Activated naive CD4-positive, alpha-beta T cell treated with anti-CD3 and anti-CD28 coated beads for 36 hours (primary cell): ENCODE measurements at regions of chr2 and their contacts with region 1.

Region 1: DNA sequence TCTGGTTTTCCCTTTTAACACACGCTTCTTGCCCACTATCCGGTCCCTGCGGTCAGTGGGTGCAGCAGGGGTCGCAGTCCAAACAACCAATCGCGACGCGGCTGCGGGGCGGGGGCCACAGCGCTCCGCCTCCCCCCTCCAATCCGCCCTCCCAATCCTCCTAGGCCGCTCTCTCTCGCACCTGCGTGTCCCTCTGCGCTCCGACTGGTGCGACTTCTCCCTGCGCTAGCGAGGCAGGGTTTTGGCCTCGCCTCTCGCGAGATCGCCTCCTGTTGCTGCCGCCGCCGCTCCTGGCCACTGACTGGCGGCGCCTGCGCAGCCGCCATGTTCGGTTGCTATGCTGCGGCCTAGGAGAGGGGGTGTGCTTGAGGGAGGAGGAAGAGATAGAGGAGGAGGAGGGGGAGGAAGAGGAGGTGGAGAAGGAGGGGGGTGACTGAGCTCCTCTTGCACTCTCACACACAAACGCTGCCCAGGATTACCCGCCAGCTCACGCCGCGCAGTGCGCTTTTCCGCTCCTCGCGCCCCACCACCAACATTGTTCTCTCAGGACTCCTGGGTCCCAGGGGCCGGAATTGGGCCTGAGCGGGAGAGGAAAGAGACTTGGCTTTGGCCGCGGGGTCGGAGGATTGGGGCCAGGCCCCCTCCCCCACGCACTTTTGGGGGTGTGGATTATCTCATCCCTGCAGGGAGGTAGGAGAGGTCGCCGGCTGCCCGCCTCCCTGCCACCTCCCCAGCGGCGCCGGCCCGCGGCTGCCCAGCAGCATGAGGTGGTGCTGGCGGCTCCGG is at the start of gene PTPN4:
- DNase-seq: peak; percentile 96
- H3K4me3 Mint-ChIP-seq: peak within 1 kb of the TSS; percentile 86
- H3K27ac Mint-ChIP-seq: peak within 1 kb of the TSS; percentile 90
- H3K4me1 Mint-ChIP-seq: peaks cover 35% of the 10 kb centered on the region
- H3K27me3 Mint-ChIP-seq: no peaks in the 10 kb centered on the region
- total RNA-seq, gene PTPN4: 28.4 to 29.8 TPM

Region 2: DNA sequence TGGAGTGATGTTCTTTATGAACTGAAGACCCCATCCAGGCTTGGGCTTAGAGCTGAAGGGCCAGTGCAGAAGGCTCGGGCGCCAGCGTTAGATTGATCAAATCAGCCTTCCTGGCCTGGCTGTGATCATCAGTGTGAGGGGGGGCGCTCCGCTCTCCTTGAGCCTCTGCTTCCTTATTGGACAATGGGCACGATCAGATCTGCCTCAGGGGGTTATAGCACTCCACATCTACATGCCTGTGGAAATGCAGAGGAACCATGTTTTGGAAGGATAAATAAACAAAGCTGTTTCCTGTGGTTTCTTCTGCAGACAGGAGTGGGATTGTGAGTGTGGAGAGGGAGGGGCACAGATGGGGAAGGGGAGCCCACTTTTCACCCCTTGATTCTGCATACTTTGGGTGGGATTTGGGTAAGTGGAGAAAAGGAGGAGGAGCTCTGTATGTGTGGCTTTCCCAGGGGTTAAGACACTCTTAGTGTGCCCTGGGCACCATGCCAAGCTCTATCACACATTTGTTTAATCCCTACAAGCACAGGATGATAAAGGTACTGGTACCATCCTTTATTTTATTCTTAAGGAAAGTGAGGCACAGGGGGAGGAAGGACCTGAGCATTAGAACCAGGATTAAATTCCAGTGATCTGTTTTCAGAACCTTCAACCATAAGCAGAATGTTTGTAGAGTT is 1062.7 kb before region 1 on chr2:
- CTCF ChIA-PET with region 1: no interaction called
- intact Hi-C with region 1: no loop called
- DNase-seq: no peak
- H3K4me3 Mint-ChIP-seq: no peak overlapping the region
- H3K27ac Mint-ChIP-seq: no peak overlapping the region
- H3K4me1 Mint-ChIP-seq: no peaks in the 10 kb centered on the region
- H3K27me3 Mint-ChIP-seq: peaks cover 5% of the 10 kb centered on the region

Region 3: GRCh38 chr2:118732432-118732831 is 1027.2 kb before region 1 on chr2:
- CTCF ChIA-PET with region 1: no interaction called
- intact Hi-C with region 1: no loop called
- DNase-seq: no peak
- H3K4me3 Mint-ChIP-seq: no peak overlapping the region
- H3K27ac Mint-ChIP-seq: no peak overlapping the region
- H3K4me1 Mint-ChIP-seq: no peaks in the 10 kb centered on the region
- H3K27me3 Mint-ChIP-seq: peaks cover 10% of the 10 kb centered on the region

Region 4: GRCh38 chr2:119366649-119367471 is 392.8 kb before region 1 on chr2 and contains the starts of genes C2orf76 and DBI:
- CTCF ChIA-PET with region 1: no interaction called
- intact Hi-C with region 1: loop called (anchors 1 kb)
- DNase-seq: peak; percentile 94
- H3K4me3 Mint-ChIP-seq: peak within 1 kb of the TSS; percentile 99
- H3K27ac Mint-ChIP-seq: peak within 1 kb of the TSS; percentile 92
- H3K4me1 Mint-ChIP-seq: peaks cover 42% of the 10 kb centered on the region
- H3K27me3 Mint-ChIP-seq: no peaks in the 10 kb centered on the region
- total RNA-seq, gene C2orf76: 9.5 to 11.1 TPM
- total RNA-seq, gene DBI: 133 to 134 TPM

Region 5: GRCh38 chr2:119694845-119695521 is 64.7 kb before region 1 on chr2:
- CTCF ChIA-PET with region 1: no interaction called
- intact Hi-C with region 1: loop called (anchors 1 kb)
- DNase-seq: peak; percentile 51
- H3K4me3 Mint-ChIP-seq: peak overlapping the region; percentile 32
- H3K27ac Mint-ChIP-seq: no peak overlapping the region
- H3K4me1 Mint-ChIP-seq: peaks cover 48% of the 10 kb centered on the region
- H3K27me3 Mint-ChIP-seq: no peaks in the 10 kb centered on the region

Region 6: GRCh38 chr2:119826370-119826961 is 66.8 kb after region 1 on chr2:
- CTCF ChIA-PET with region 1: interaction called, 59 read pairs
- intact Hi-C with region 1: loop called (anchors 1 kb)
- DNase-seq: peak; percentile 58
- H3K4me3 Mint-ChIP-seq: no peak overlapping the region
- H3K27ac Mint-ChIP-seq: no peak overlapping the region
- H3K4me1 Mint-ChIP-seq: peaks cover 43% of the 10 kb centered on the region
- H3K27me3 Mint-ChIP-seq: no peaks in the 10 kb centered on the region

Region 7: GRCh38 chr2:120012771-120013596 is 253.3 kb after region 1 on chr2 and contains the start of gene EPB41L5:
- CTCF ChIA-PET with region 1: no interaction called
- intact Hi-C with region 1: loop called (anchors 1 kb)
- DNase-seq: peak; percentile 79
- H3K4me3 Mint-ChIP-seq: peak within 1 kb of the TSS; percentile 77
- H3K27ac Mint-ChIP-seq: no peak within 1 kb of the TSS
- H3K4me1 Mint-ChIP-seq: peaks cover 8% of the 10 kb centered on the region
- H3K27me3 Mint-ChIP-seq: no peaks in the 10 kb centered on the region
- total RNA-seq, gene EPB41L5: 2.3 to 2.5 TPM

Region 8: GRCh38 chr2:120231974-120232635 is 472.5 kb after region 1 on chr2:
- CTCF ChIA-PET with region 1: interaction called, 7 read pairs
- intact Hi-C with region 1: loop called (anchors 1 kb)
- DNase-seq: peak; percentile 86
- H3K4me3 Mint-ChIP-seq: peak overlapping the region; percentile 82
- H3K27ac Mint-ChIP-seq: peak overlapping the region; percentile 94
- H3K4me1 Mint-ChIP-seq: peaks cover 47% of the 10 kb centered on the region
- H3K27me3 Mint-ChIP-seq: no peaks in the 10 kb centered on the region

Region 9: GRCh38 chr2:120294008-120294340 is 534.3 kb after region 1 on chr2:
- CTCF ChIA-PET with region 1: no interaction called
- intact Hi-C with region 1: no loop called
- DNase-seq: no peak
- H3K4me3 Mint-ChIP-seq: no peak overlapping the region
- H3K27ac Mint-ChIP-seq: no peak overlapping the region
- H3K4me1 Mint-ChIP-seq: peaks cover 4% of the 10 kb centered on the region
- H3K27me3 Mint-ChIP-seq: no peaks in the 10 kb centered on the region

Region 10: GRCh38 chr2:121649596-121650314 is 1890.1 kb after region 1 on chr2:
- CTCF ChIA-PET with region 1: no interaction called
- intact Hi-C with region 1: loop called (anchors 10 kb)
- DNase-seq: peak; percentile 97
- H3K4me3 Mint-ChIP-seq: peak overlapping the region; percentile 98
- H3K27ac Mint-ChIP-seq: peak overlapping the region; percentile 99
- H3K4me1 Mint-ChIP-seq: peaks cover 63% of the 10 kb centered on the region
- H3K27me3 Mint-ChIP-seq: no peaks in the 10 kb centered on the region